ENCODE measurements at regions of chr17 and their contacts with region 1.

Region 1: GRCh38 chr17:40219073-40219860 is at the start of gene WIPF2:
- DNase-seq: peak; percentile 94 to 97 (median 95)
- H3K4me3 ChIP-seq: peak within 1 kb of the TSS; percentile 59 to 71
- H3K4me3 Mint-ChIP-seq: peak within 1 kb of the TSS; percentile 92 to 100 (median 98)
- H3K27ac ChIP-seq: peak within 1 kb of the TSS; percentile 96
- H3K27ac Mint-ChIP-seq: peak within 1 kb of the TSS; percentile 93 to 100 (median 100)
- H3K4me1 ChIP-seq: peaks cover 26% of the 10 kb centered on the region
- H3K4me1 Mint-ChIP-seq: peaks cover 23 to 49% (median 33%) of the 10 kb centered on the region in 4 donors
- H3K27me3 ChIP-seq: no peaks in the 10 kb centered on the region
- H3K27me3 Mint-ChIP-seq: no peaks in the 10 kb centered on the region
- total RNA-seq, gene WIPF2: 34.4 to 34.7 TPM

Region 2: DNA sequence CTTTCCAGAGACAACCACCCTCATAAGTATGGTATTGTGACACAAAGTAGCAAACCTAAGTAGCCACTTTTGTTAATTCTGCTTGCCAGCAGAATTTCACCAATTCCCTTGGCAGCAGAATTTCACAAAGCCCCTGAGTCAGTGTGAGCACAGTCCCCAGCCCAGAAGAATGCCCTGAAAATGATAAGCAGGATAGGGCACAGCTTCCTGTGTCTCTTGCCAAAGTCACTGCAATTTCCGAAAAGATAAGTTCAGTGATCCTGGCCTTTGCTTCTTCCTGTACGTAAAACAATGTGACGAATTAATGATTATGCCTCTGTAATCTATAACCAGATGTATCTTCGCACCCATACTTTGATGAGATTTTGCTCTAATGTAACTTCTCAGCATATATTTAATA is 16.1 kb before region 1 on chr17:
- CTCF ChIA-PET with region 1: interaction called, 34 read pairs
- POLR2A ChIA-PET with region 1: interaction called, 3 read pairs
- intact Hi-C with region 1: no loop called
- DNase-seq: no peak
- H3K4me3 ChIP-seq: no peak overlapping the region
- H3K4me3 Mint-ChIP-seq: no peak overlapping the region
- H3K27ac ChIP-seq: no peak overlapping the region
- H3K27ac Mint-ChIP-seq: peak overlapping the region in 1 of 7 donors; percentile 50
- H3K4me1 ChIP-seq: no peaks in the 10 kb centered on the region
- H3K4me1 Mint-ChIP-seq: peaks cover 0 to 6% (median 2%) of the 10 kb centered on the region in 4 donors
- H3K27me3 ChIP-seq: no peaks in the 10 kb centered on the region
- H3K27me3 Mint-ChIP-seq: peaks cover 1 to 7% of the 10 kb centered on the region in 2 donors

Region 3: DNA sequence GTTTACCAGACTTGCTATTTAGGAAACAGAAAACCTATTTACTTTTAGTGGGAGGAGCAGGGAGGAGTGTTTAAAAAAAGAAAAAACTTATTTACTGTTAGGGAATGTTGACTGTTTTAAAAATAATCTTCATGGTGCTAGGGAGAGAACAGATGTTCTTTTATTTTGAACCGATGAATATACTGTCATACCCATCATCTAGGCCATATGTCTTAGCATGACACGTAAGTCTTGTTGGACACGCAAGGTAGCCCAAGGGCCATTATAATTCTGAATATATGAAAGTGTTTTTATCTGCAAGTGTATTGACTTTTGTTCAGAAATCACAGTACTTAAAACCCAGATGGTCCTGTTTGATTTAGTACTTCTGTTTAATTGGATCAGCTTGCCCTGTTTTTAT is 11.4 kb after region 1 on chr17:
- CTCF ChIA-PET with region 1: interaction called, 10 read pairs
- POLR2A ChIA-PET with region 1: interaction called, 5 read pairs
- intact Hi-C with region 1: no loop called
- DNase-seq: no peak
- H3K4me3 ChIP-seq: no peak overlapping the region
- H3K4me3 Mint-ChIP-seq: peak overlapping the region in 1 of 8 donors; percentile 4
- H3K27ac ChIP-seq: no peak overlapping the region
- H3K27ac Mint-ChIP-seq: peak overlapping the region in 3 of 7 donors; percentile 19 to 42 (median 39)
- H3K4me1 ChIP-seq: peaks cover 9% of the 10 kb centered on the region
- H3K4me1 Mint-ChIP-seq: peaks cover 15 to 36% (median 18%) of the 10 kb centered on the region in 4 donors
- H3K27me3 ChIP-seq: no peaks in the 10 kb centered on the region
- H3K27me3 Mint-ChIP-seq: no peaks in the 10 kb centered on the region